H1 (cell line): ENCODE measurements at regions of chr20 and their contacts with region 1.

Region 1: GRCh38 chr20:9323622-9324021 is 190.8 kb upstream of the LAMP5 start:
- DNase-seq: peak in 1 of 2 experiments; percentile 5
- H3K4me3 ChIP-seq: no peak overlapping the region
- H3K27ac ChIP-seq: no peak overlapping the region
- H3K4me1 ChIP-seq: peaks cover 0 to 2% (median 0%) of the 10 kb centered on the region in 4 experiments; a peak in 2 of 7 replicates
- H3K27me3 ChIP-seq: no peaks in the 10 kb centered on the region
- CTCF ChIP-seq: peak; percentile 54 to 84 (median 75)
- EP300 ChIP-seq: no peak
- POLR2A ChIP-seq: no peak
- RAD21 ChIP-seq: peak; percentile 46 to 62; a peak in 3 of 4 replicates

Region 2: GRCh38 chr20:9186396-9186795 is 137.2 kb before region 1 on chr20:
- CTCF ChIA-PET with region 1: no interaction called
- POLR2A ChIA-PET with region 1: no interaction called
- DNase-seq: no peak
- H3K4me3 ChIP-seq: no peak overlapping the region
- H3K27ac ChIP-seq: no peak overlapping the region
- H3K4me1 ChIP-seq: no peaks in the 10 kb centered on the region; a peak in 1 of 7 replicates
- H3K27me3 ChIP-seq: no peaks in the 10 kb centered on the region
- CTCF ChIP-seq: no peak
- EP300 ChIP-seq: no peak
- POLR2A ChIP-seq: no peak
- RAD21 ChIP-seq: no peak

Region 3: GRCh38 chr20:9311132-9311531 is 12.5 kb before region 1 on chr20:
- CTCF ChIA-PET with region 1: interaction called, 14 read pairs
- POLR2A ChIA-PET with region 1: no interaction called
- DNase-seq: no peak
- H3K4me3 ChIP-seq: no peak overlapping the region
- H3K27ac ChIP-seq: no peak overlapping the region
- H3K4me1 ChIP-seq: no peaks in the 10 kb centered on the region
- H3K27me3 ChIP-seq: no peaks in the 10 kb centered on the region
- CTCF ChIP-seq: no peak
- EP300 ChIP-seq: no peak
- POLR2A ChIP-seq: no peak
- RAD21 ChIP-seq: no peak

Region 4: GRCh38 chr20:9339708-9340107 is 16.1 kb after region 1 on chr20:
- CTCF ChIA-PET with region 1: interaction called, 13 read pairs
- POLR2A ChIA-PET with region 1: no interaction called
- DNase-seq: no peak
- H3K4me3 ChIP-seq: no peak overlapping the region
- H3K27ac ChIP-seq: no peak overlapping the region
- H3K4me1 ChIP-seq: no peaks in the 10 kb centered on the region
- H3K27me3 ChIP-seq: no peaks in the 10 kb centered on the region
- CTCF ChIP-seq: no peak
- EP300 ChIP-seq: no peak
- POLR2A ChIP-seq: no peak
- RAD21 ChIP-seq: no peak